ENCODE measurements at regions of chr4 and their contacts with region 1.

Region 1: DNA sequence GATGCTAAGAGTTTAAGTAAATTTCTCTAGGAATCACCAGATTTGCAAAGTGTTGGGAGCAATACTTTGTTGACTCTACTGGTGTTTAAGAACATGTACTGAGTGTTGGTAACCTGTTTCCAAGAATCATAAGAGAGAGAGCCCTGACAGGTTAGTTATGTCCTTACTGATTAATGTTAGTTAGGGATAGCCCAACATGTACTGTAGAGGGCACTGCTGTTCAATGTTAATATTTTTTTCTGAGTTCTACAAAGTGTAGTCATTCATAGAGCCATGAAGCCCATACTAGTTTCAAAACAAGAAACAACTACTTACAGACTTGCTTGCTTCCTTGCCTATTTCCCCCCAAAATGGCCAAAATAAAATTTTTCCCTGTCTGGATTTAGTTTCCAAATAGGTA is 11.9 kb downstream of the TMPRSS11D start:
- DNase-seq: peak; percentile 29 to 67 (median 38)
- H3K4me3 ChIP-seq: no peak overlapping the region
- H3K4me3 Mint-ChIP-seq: no peak overlapping the region
- H3K27ac ChIP-seq: no peak overlapping the region
- H3K27ac Mint-ChIP-seq: no peak overlapping the region
- H3K4me1 ChIP-seq: no peaks in the 10 kb centered on the region
- H3K4me1 Mint-ChIP-seq: no peaks in the 10 kb centered on the region
- H3K27me3 ChIP-seq: no peaks in the 10 kb centered on the region
- H3K27me3 Mint-ChIP-seq: peaks cover 1 to 2% (median 1%) of the 10 kb centered on the region in 3 donors
- CTCF ChIP-seq: peak; percentile 74

Region 2: DNA sequence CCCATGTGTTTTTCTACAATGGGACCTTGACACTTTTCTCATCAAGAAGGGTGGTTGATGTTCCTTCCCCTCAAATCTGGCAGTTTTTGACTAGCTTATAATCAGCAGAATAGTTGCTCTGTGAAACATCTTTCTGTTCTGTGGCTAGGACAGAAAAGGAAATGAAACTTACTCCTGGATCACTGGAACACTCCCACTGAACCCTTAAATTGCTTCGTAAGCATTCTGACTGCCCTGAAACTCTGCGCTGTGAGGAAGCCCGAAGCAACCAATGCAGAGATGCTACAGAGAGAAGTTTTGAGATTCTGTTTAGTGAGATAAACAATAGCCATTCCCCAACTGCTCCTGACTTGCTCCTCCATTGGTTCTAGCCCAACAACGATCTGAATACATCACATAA is 928.8 kb before region 1 on chr4:
- intact Hi-C with region 1: no loop called
- DNase-seq: peak; percentile 10 to 41 (median 19)
- H3K4me3 ChIP-seq: no peak overlapping the region
- H3K4me3 Mint-ChIP-seq: no peak overlapping the region
- H3K27ac ChIP-seq: no peak overlapping the region
- H3K27ac Mint-ChIP-seq: no peak overlapping the region
- H3K4me1 ChIP-seq: peaks cover 11 to 19% of the 10 kb centered on the region in 2 donors
- H3K4me1 Mint-ChIP-seq: peaks cover 12% of the 10 kb centered on the region
- H3K27me3 ChIP-seq: no peaks in the 10 kb centered on the region
- H3K27me3 Mint-ChIP-seq: no peaks in the 10 kb centered on the region
- CTCF ChIP-seq: no peak

Region 3: DNA sequence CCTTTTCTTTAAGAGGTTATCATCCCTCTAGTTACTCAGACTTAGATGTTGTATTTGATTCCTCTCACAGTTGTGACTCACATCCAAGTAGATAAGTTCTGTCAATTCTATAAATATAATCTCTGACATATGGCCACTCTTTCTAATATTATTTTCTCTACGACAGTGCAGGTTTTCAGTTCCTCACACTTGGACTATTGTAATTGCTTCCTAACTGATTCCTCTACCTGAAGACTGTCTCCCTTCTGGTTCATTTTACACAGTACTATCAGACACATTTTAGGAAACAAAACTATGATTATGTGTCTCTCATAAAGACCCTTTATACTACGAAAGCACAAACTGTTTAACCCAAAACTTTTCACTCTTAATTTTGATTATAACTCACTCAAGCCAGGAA is 86.3 kb before region 1 on chr4:
- intact Hi-C with region 1: no loop called
- DNase-seq: no peak
- H3K4me3 ChIP-seq: no peak overlapping the region
- H3K4me3 Mint-ChIP-seq: no peak overlapping the region
- H3K27ac ChIP-seq: no peak overlapping the region
- H3K27ac Mint-ChIP-seq: no peak overlapping the region
- H3K4me1 ChIP-seq: no peaks in the 10 kb centered on the region
- H3K4me1 Mint-ChIP-seq: no peaks in the 10 kb centered on the region
- H3K27me3 ChIP-seq: no peaks in the 10 kb centered on the region
- H3K27me3 Mint-ChIP-seq: peaks cover 0 to 1% (median 0%) of the 10 kb centered on the region in 3 donors
- CTCF ChIP-seq: no peak

Region 4: DNA sequence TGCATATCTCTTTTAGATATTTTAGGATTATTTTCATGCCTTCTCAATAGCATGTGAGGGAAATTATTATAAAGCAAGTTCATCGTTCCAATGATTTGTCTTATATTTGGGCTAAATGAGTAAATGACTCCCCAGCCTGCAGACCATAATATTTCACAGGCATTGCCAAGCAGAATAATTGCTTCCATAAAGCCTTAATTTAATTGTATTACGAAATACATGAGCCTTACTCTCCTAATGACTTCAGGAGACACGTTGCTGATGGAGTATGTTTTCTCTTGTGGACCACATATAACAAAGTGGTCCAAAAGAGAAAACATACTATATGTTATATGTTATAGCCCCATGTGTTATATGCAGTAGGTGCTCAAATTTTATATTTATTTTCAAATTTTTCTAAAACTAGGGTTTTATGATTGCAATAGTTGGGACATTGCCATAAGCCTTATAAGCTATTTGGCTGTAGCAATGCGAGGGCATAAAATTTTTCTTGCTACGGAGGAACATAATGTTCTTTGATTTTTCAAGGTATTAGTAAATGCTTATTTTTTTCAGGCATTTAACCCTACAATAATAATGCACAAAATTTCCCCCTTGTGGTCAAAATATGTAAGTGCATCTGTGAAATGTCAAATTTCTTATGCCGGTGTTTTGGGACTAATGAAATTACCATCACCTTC is 38.2 kb after region 1 on chr4:
- intact Hi-C with region 1: loop called (anchors 5 kb)
- DNase-seq: peak; percentile 6 to 35 (median 14)
- H3K4me3 ChIP-seq: no peak overlapping the region
- H3K4me3 Mint-ChIP-seq: no peak overlapping the region
- H3K27ac ChIP-seq: no peak overlapping the region
- H3K27ac Mint-ChIP-seq: no peak overlapping the region
- H3K4me1 ChIP-seq: no peaks in the 10 kb centered on the region
- H3K4me1 Mint-ChIP-seq: no peaks in the 10 kb centered on the region
- H3K27me3 ChIP-seq: no peaks in the 10 kb centered on the region
- H3K27me3 Mint-ChIP-seq: peaks cover 0 to 4% (median 0%) of the 10 kb centered on the region in 3 donors
- CTCF ChIP-seq: peak; percentile 90

Region 5: DNA sequence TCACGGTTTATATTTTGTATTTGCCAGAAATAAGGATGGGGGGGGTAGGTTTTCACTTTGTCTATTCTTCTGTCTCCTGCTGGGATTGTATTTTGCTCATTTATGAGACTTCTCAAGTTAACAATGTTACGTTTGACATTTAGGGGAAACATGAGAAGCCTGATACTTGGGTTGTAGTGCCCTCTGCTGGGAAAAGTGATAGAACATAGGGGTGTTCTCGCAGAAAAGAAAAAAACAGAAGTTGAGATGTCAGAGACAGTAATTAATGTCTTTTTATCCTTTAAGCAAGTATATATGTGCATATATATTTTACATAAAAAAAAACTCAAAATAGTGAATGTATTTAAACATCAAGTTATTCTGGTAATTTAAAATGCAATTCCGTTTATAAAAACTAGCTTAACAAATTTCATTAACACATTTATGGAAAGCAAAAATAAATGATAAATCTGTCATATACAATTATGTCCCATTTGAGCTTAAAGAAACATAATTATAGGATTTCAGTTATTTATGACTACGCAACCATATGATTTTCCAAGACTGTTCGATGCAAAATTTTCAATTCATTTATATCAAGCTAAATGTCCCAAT is 303.8 kb after region 1 on chr4:
- intact Hi-C with region 1: loop called (anchors 5 to 10 kb)
- DNase-seq: peak; percentile 15 to 40 (median 32)
- H3K4me3 ChIP-seq: no peak overlapping the region
- H3K4me3 Mint-ChIP-seq: no peak overlapping the region
- H3K27ac ChIP-seq: no peak overlapping the region
- H3K27ac Mint-ChIP-seq: no peak overlapping the region
- H3K4me1 ChIP-seq: no peaks in the 10 kb centered on the region
- H3K4me1 Mint-ChIP-seq: no peaks in the 10 kb centered on the region
- H3K27me3 ChIP-seq: no peaks in the 10 kb centered on the region
- H3K27me3 Mint-ChIP-seq: peaks cover 0 to 2% (median 1%) of the 10 kb centered on the region in 3 donors
- CTCF ChIP-seq: peak; percentile 64